B cell (primary cell): ENCODE measurements at regions of chr21 and their contacts with region 1.

Region 1: DNA sequence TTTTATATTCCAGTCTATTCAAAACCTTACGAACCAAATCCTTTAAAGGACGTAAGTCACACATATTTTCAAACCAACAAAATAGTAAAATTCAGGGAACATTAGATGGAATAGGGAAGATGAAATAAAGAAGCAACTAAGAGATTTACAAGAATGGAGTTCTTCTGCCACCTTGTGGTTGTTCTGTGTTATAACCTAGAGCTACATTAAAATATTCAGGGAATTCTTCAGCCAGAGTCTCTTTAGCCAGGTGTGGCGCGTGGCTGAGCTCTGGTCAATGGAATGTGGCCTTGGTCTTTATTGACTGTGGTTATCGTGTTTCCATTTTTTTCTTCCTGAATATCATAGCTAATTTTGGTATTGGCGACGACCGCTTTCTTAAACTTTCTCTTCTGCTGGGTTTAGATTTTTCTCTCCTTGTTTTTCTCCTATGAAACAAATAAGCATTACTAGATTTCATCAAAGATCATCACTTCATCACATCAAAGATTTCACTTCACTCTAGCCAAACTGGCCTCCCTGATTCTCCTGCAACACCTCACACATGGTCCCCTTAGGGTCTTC is 221.3 kb downstream of the MRPL39 start:
- DNase-seq: peak; percentile 69
- ATAC-seq: peak; percentile 43
- H3K4me3 ChIP-seq: no peak overlapping the region
- H3K4me3 Mint-ChIP-seq: no peak overlapping the region
- H3K27ac ChIP-seq: no peak overlapping the region
- H3K27ac Mint-ChIP-seq: no peak overlapping the region
- H3K4me1 ChIP-seq: no peaks in the 10 kb centered on the region
- H3K4me1 Mint-ChIP-seq: peaks cover 6% of the 10 kb centered on the region
- H3K27me3 ChIP-seq: no peaks in the 10 kb centered on the region
- H3K27me3 Mint-ChIP-seq: no peaks in the 10 kb centered on the region
- CTCF ChIP-seq: peak; percentile 99

Region 2: DNA sequence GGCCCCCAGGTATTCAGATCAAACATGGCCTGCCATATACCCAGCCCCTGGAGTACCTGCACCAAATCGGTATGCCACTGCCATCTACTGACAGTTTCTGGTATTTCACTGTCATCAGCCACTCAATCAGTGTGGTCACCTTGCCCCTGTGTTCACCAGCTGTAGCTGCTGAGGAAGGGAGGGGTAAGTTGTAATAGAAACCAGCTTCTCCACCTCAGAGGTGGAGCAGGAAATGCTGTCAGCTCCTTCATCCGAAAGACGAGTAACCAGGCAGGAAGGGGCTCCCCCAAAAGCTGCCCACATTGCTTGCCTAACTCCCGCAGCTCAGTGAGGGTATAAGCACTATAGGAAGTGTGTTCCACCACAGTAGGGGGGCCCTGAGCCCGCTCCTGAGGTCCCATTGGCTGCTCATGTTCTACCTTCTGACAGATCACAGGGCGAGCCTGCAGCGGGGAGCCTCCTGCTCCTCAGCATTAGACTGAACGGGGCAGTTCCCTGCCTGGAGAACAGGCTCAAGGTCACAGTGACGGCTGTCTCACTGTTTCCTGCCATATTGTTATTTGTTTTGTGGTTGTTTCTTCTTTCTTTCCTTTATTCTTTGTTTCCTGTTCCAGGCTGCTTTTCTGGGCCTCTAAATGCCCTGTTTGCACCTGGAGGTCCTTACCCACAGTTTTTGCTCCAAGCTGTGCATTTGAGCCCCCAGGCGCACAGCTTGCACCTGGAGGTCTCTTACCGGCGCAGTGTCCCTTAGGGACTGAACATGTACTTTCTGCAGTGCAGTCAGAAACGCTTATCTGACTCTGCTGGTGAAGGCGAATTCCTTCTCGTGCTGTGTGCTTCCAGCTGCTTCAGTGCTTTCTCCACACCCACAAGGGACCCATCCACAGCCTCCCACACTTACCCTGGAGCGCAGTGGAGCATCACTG is 1417.0 kb before region 1 on chr21:
- CTCF ChIA-PET with region 1: interaction called, 5 read pairs
- POLR2A ChIA-PET with region 1: no interaction called
- intact Hi-C with region 1: loop called (anchors 10 kb)
- DNase-seq: peak; percentile 94
- ATAC-seq: peak; percentile 90
- H3K4me3 ChIP-seq: peak overlapping the region; percentile 13 to 63 (median 35)
- H3K4me3 Mint-ChIP-seq: peak overlapping the region; percentile 86
- H3K27ac ChIP-seq: peak overlapping the region; percentile 62 to 66
- H3K27ac Mint-ChIP-seq: peak overlapping the region; percentile 80
- H3K4me1 ChIP-seq: peaks cover 16 to 22% of the 10 kb centered on the region in 2 donors
- H3K4me1 Mint-ChIP-seq: peaks cover 23% of the 10 kb centered on the region
- H3K27me3 ChIP-seq: no peaks in the 10 kb centered on the region
- H3K27me3 Mint-ChIP-seq: no peaks in the 10 kb centered on the region
- CTCF ChIP-seq: peak; percentile 87

Region 3: GRCh38 chr21:24375201-24375600 is 1010.8 kb before region 1 on chr21:
- CTCF ChIA-PET with region 1: interaction called, 3 read pairs
- POLR2A ChIA-PET with region 1: no interaction called
- intact Hi-C with region 1: loop called (anchors 10 kb)
- DNase-seq: peak; percentile 17
- ATAC-seq: no peak
- H3K4me3 ChIP-seq: no peak overlapping the region
- H3K4me3 Mint-ChIP-seq: no peak overlapping the region
- H3K27ac ChIP-seq: no peak overlapping the region
- H3K27ac Mint-ChIP-seq: peak overlapping the region; percentile 18
- H3K4me1 ChIP-seq: no peaks in the 10 kb centered on the region
- H3K4me1 Mint-ChIP-seq: peaks cover 2% of the 10 kb centered on the region
- H3K27me3 ChIP-seq: no peaks in the 10 kb centered on the region
- H3K27me3 Mint-ChIP-seq: no peaks in the 10 kb centered on the region
- CTCF ChIP-seq: no peak

Region 4: DNA sequence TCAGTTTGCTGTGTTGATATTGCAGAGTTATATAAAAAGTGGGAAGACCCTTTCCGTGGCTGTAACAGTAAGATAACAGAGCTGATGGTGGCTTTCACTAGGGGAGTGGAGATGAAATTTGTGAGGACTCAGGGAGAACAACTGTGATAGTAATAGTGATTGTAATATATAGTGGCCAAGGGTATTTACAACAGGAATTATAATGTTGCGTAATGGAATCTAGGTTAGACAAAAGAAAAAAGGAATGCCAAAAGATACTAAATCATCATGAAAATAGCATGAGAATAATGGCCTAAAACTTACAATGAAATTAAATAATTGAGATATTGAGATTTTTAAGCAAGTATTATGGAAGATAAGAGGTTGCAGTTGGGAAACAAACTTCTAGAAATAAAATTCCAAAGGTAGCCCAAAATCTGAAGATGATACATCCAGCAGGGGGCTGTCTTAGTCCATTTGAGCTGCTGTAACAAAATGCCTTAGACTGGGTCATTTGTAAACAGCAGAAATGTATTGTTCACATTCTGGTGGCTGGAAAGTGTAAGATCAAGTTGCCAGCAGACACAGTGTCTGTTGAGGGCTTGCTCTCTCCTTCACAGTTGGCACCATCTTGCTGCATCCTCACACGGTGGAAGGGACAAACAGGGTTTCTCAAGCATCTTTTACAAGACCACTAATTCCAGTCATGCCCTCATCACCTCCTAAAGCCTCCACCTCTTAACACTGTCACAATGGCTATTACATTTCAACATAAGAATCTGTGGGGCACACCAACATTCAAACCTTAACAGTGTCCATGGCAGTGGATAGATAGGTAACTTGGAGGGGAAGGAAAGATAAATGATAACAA is 489.9 kb before region 1 on chr21:
- CTCF ChIA-PET with region 1: interaction called, 38 read pairs
- POLR2A ChIA-PET with region 1: no interaction called
- intact Hi-C with region 1: no loop called
- DNase-seq: peak; percentile 62
- ATAC-seq: peak; percentile 41
- H3K4me3 ChIP-seq: no peak overlapping the region
- H3K4me3 Mint-ChIP-seq: no peak overlapping the region
- H3K27ac ChIP-seq: peak overlapping the region in 1 of 2 donors; percentile 13
- H3K27ac Mint-ChIP-seq: no peak overlapping the region
- H3K4me1 ChIP-seq: peaks cover 6% of the 10 kb centered on the region in 2 donors
- H3K4me1 Mint-ChIP-seq: peaks cover 14% of the 10 kb centered on the region
- H3K27me3 ChIP-seq: no peaks in the 10 kb centered on the region
- H3K27me3 Mint-ChIP-seq: no peaks in the 10 kb centered on the region
- CTCF ChIP-seq: peak; percentile 55

Region 5: DNA sequence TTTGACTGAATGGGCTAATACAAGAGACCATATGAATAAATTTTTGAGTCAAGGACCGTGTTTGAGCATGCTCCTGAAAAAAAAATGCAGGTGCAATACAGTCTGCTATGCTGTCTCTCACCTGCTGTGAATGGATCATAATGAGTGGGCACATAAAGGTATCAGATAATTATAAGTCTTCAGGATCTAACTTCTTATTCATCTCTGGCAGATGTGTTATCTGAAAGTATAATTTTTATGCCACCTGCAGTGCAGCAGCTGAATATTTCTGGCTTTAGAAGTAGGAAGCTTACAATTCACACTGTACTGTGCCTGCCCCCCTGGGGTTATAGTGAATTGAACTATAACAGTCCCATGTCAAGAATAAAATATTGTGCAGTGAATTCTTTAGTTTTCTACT is 112.0 kb before region 1 on chr21:
- CTCF ChIA-PET with region 1: no interaction called
- POLR2A ChIA-PET with region 1: no interaction called
- intact Hi-C with region 1: no loop called
- DNase-seq: peak; percentile 6
- ATAC-seq: no peak
- H3K4me3 ChIP-seq: no peak overlapping the region
- H3K4me3 Mint-ChIP-seq: no peak overlapping the region
- H3K27ac ChIP-seq: no peak overlapping the region
- H3K27ac Mint-ChIP-seq: no peak overlapping the region
- H3K4me1 ChIP-seq: peaks cover 0 to 4% of the 10 kb centered on the region in 2 donors
- H3K4me1 Mint-ChIP-seq: peaks cover 10% of the 10 kb centered on the region
- H3K27me3 ChIP-seq: no peaks in the 10 kb centered on the region
- H3K27me3 Mint-ChIP-seq: no peaks in the 10 kb centered on the region
- CTCF ChIP-seq: no peak

Region 6: GRCh38 chr21:25396135-25396711 is 10.2 kb after region 1 on chr21:
- CTCF ChIA-PET with region 1: interaction called, 16 read pairs
- POLR2A ChIA-PET with region 1: no interaction called
- intact Hi-C with region 1: no loop called
- DNase-seq: peak; percentile 35
- ATAC-seq: peak; percentile 49
- H3K4me3 ChIP-seq: no peak overlapping the region
- H3K4me3 Mint-ChIP-seq: peak overlapping the region; percentile 64
- H3K27ac ChIP-seq: no peak overlapping the region
- H3K27ac Mint-ChIP-seq: peak overlapping the region; percentile 65
- H3K4me1 ChIP-seq: peaks cover 3 to 7% of the 10 kb centered on the region in 2 donors
- H3K4me1 Mint-ChIP-seq: peaks cover 8% of the 10 kb centered on the region
- H3K27me3 ChIP-seq: no peaks in the 10 kb centered on the region
- H3K27me3 Mint-ChIP-seq: no peaks in the 10 kb centered on the region
- CTCF ChIP-seq: no peak

Region 7: DNA sequence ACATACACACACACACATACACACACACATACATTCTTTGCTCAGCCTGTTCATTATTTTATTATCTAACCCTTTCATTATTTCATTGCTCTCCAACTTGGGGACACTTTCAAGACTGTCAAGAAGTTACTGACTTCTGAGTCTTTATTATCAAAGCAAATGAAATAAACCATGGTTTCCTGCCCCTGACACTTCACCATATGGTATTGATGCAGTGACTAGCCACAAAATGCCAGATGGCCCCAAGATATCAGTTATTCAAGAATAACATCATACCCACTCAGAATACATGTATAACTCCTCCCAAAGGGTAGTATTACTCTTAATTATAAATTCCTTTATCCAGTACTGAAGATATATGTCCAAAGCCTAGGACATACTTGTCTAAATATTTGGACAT is 24.0 kb after region 1 on chr21:
- CTCF ChIA-PET with region 1: no interaction called
- POLR2A ChIA-PET with region 1: no interaction called
- intact Hi-C with region 1: no loop called
- DNase-seq: no peak
- ATAC-seq: no peak
- H3K4me3 ChIP-seq: no peak overlapping the region
- H3K4me3 Mint-ChIP-seq: no peak overlapping the region
- H3K27ac ChIP-seq: no peak overlapping the region
- H3K27ac Mint-ChIP-seq: no peak overlapping the region
- H3K4me1 ChIP-seq: peaks cover 35 to 52% of the 10 kb centered on the region in 2 donors
- H3K4me1 Mint-ChIP-seq: peaks cover 46% of the 10 kb centered on the region
- H3K27me3 ChIP-seq: no peaks in the 10 kb centered on the region
- H3K27me3 Mint-ChIP-seq: no peaks in the 10 kb centered on the region
- CTCF ChIP-seq: no peak

Region 8: DNA sequence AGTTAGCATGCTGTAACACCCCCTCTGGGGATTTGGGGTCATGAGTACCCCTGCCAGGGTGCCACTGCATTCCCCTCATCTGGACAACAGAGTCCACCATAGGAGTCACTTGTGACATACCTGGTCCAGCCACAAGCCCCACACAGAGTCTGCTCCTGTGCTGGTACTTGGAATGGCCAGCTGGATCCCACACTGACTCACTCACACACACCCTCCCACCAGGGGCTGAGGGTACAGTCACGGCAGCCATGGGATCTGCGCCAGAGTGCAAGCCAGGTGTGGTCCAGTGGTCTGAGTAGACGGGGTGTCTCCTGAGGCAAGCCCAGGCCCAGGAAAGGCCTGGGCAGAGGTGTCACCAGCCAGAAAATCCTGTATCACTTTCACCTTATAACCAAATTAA is 153.6 kb after region 1 on chr21:
- CTCF ChIA-PET with region 1: no interaction called
- POLR2A ChIA-PET with region 1: no interaction called
- intact Hi-C with region 1: no loop called
- DNase-seq: no peak
- ATAC-seq: no peak
- H3K4me3 ChIP-seq: no peak overlapping the region
- H3K4me3 Mint-ChIP-seq: no peak overlapping the region
- H3K27ac ChIP-seq: no peak overlapping the region
- H3K27ac Mint-ChIP-seq: no peak overlapping the region
- H3K4me1 ChIP-seq: no peaks in the 10 kb centered on the region
- H3K4me1 Mint-ChIP-seq: peaks cover 4% of the 10 kb centered on the region
- H3K27me3 ChIP-seq: no peaks in the 10 kb centered on the region
- H3K27me3 Mint-ChIP-seq: no peaks in the 10 kb centered on the region
- CTCF ChIP-seq: no peak

Region 9: GRCh38 chr21:25568246-25568645 is 182.3 kb after region 1 on chr21:
- CTCF ChIA-PET with region 1: interaction called, 3 read pairs
- POLR2A ChIA-PET with region 1: no interaction called
- intact Hi-C with region 1: loop called (anchors 1 kb)
- DNase-seq: peak; percentile 54
- ATAC-seq: peak; percentile 22
- H3K4me3 ChIP-seq: no peak overlapping the region
- H3K4me3 Mint-ChIP-seq: peak overlapping the region; percentile 61
- H3K27ac ChIP-seq: peak overlapping the region; percentile 33 to 65
- H3K27ac Mint-ChIP-seq: peak overlapping the region; percentile 81
- H3K4me1 ChIP-seq: peaks cover 50 to 61% of the 10 kb centered on the region in 2 donors
- H3K4me1 Mint-ChIP-seq: peaks cover 86% of the 10 kb centered on the region
- H3K27me3 ChIP-seq: no peaks in the 10 kb centered on the region
- H3K27me3 Mint-ChIP-seq: no peaks in the 10 kb centered on the region
- CTCF ChIP-seq: no peak

Region 10: DNA sequence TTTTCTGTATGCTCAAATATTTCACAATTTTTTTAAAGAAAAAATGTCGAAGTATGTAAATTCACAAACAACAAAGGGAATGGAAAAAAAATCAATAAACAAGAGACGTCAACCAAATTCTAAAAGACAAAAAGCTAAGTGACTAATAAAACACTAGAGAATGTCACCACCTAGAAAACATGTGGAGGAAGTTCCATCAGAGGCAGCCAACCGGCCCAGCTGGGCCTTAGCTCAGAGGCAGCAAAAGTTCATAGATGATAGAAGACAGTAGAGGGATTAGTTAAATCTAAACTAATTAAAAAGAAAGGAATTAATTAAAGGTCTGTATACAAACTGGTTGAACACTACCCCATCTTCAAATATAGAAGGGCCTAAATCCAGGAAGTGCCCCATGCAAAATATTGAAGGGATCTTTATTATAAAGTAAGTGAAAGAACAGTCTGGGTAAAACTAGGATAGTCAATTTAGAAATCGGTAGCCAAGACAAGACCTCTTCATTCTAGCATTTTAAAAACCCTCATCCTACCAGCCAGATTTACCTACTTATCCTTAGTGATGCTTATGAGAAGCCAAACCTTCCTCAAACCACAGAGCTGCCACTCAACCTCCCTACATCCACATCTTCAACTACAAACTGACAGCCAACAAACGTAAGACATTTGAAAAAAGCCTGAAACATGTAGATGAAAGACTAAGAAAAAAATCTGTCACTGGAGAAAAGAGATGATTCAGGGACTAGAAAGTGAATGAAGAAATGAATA is 197.6 kb after region 1 on chr21:
- CTCF ChIA-PET with region 1: no interaction called
- POLR2A ChIA-PET with region 1: no interaction called
- intact Hi-C with region 1: no loop called
- DNase-seq: no peak
- ATAC-seq: no peak
- H3K4me3 ChIP-seq: no peak overlapping the region
- H3K4me3 Mint-ChIP-seq: no peak overlapping the region
- H3K27ac ChIP-seq: peak overlapping the region in 1 of 2 donors; percentile 65
- H3K27ac Mint-ChIP-seq: peak overlapping the region; percentile 70
- H3K4me1 ChIP-seq: peaks cover 0 to 7% of the 10 kb centered on the region in 2 donors
- H3K4me1 Mint-ChIP-seq: peaks cover 15% of the 10 kb centered on the region
- H3K27me3 ChIP-seq: no peaks in the 10 kb centered on the region
- H3K27me3 Mint-ChIP-seq: no peaks in the 10 kb centered on the region
- CTCF ChIP-seq: no peak